PC-9 (cell line): ENCODE measurements at regions of chr1 and their contacts with region 1.

Region 1: DNA sequence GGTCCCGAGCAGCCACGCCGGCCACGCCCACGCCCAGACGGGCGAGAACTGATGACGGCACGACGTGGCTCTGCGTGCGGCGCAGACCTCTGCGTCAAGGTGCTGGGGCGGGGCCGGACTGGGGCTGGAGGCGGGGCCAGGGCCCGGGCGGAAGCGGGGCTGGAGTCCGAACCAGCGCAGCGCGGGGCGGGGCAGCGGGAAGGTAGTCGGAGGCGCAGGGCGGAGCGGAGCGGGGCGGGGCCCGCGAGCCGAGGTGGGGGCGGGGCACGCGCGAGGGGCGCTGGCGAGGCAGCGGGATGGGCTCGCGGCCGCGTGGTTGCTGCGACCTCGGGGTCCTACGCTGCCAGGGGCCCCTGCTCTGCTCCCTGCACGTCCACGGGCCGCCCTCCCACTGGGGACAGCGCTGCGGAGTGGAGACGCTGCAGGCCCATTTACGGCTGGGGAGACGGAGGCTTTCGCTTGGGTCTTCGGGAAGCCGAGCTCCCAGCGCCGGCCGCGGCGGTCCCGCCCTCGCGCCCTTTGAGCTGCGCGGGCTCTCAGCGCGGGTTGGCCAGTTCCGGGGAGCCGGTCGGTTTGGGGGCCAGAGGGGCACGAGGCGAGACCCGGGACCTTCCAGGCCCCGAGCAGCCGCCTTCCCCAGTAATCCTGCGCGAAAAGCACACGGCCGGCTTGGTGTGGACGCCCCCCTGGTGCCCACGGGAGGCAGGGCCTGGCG is at the start of gene PEX10:
- DNase-seq: peak; percentile 81 to 98
- H3K4me3 ChIP-seq: peak within 1 kb of the TSS; percentile 97
- H3K27ac ChIP-seq: peak within 1 kb of the TSS; percentile 36; the same call in 1 of the 2 replicates
- H3K4me1 ChIP-seq: peaks cover 25% of the 10 kb centered on the region
- H3K27me3 ChIP-seq: no peaks in the 10 kb centered on the region
- CTCF ChIP-seq: no peak
- total RNA-seq, gene PEX10: 24.3 and 26.3 TPM in 2 replicates

Region 2: DNA sequence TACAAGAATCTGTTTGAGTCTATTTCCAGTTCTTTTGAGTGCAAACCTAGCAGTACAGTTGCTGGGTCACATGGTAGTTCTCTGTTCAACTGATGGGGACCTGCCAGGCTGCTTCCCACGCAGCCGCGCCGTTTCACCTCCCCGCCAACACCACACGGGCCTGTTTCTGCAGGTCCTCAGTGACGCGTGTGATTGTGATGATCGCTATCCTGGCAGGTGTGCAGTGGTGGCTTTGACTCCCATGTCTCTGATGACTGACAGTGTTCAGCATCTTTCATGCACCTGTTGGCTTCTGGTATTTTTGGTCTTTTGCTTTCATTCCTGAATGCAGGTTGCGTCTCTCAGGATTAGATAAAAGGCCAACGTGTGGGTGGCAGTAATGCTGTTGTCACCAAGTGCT is 259.7 kb before region 1 on chr1:
- CTCF ChIA-PET with region 1: no interaction called
- POLR2A ChIA-PET with region 1: no interaction called
- intact Hi-C with region 1: no loop called
- DNase-seq: no peak
- H3K4me3 ChIP-seq: no peak overlapping the region
- H3K27ac ChIP-seq: no peak overlapping the region
- H3K4me1 ChIP-seq: no peaks in the 10 kb centered on the region
- H3K27me3 ChIP-seq: no peaks in the 10 kb centered on the region
- CTCF ChIP-seq: no peak

Region 3: GRCh38 chr1:2194898-2195673 is 217.6 kb before region 1 on chr1:
- CTCF ChIA-PET with region 1: interaction called, 11 read pairs
- POLR2A ChIA-PET with region 1: interaction called, 6 read pairs
- intact Hi-C with region 1: loop called (anchors 1 kb)
- DNase-seq: peak; percentile 63 to 90
- H3K4me3 ChIP-seq: peak overlapping the region; percentile 60
- H3K27ac ChIP-seq: no peak overlapping the region
- H3K4me1 ChIP-seq: peaks cover 4% of the 10 kb centered on the region
- H3K27me3 ChIP-seq: no peaks in the 10 kb centered on the region
- CTCF ChIP-seq: peak; percentile 93

Region 4: GRCh38 chr1:2391041-2391930 is 21.4 kb before region 1 on chr1 and contains the starts of genes MORN1 and RER1:
- CTCF ChIA-PET with region 1: no interaction called
- POLR2A ChIA-PET with region 1: no interaction called
- intact Hi-C with region 1: loop called (anchors 1 kb)
- DNase-seq: peak; percentile 95 to 98
- H3K4me3 ChIP-seq: peak within 1 kb of the TSS; percentile 80
- H3K27ac ChIP-seq: no peak within 1 kb of the TSS
- H3K4me1 ChIP-seq: peaks cover 19% of the 10 kb centered on the region
- H3K27me3 ChIP-seq: no peaks in the 10 kb centered on the region
- CTCF ChIP-seq: no peak
- total RNA-seq, gene MORN1: 47.8 and 51.0 TPM in 2 replicates
- total RNA-seq, gene RER1: 109 and 131 TPM in 2 replicates

Region 5: GRCh38 chr1:2539312-2539907 is 126.7 kb after region 1 on chr1:
- CTCF ChIA-PET with region 1: interaction called, 14 read pairs
- POLR2A ChIA-PET with region 1: no interaction called
- intact Hi-C with region 1: no loop called
- DNase-seq: no peak
- H3K4me3 ChIP-seq: no peak overlapping the region
- H3K27ac ChIP-seq: no peak overlapping the region
- H3K4me1 ChIP-seq: peaks cover 20% of the 10 kb centered on the region
- H3K27me3 ChIP-seq: no peaks in the 10 kb centered on the region
- CTCF ChIP-seq: peak; percentile 60

Region 6: GRCh38 chr1:2586154-2587070 is 173.7 kb after region 1 on chr1 and contains the start of gene PRXL2B:
- CTCF ChIA-PET with region 1: no interaction called
- POLR2A ChIA-PET with region 1: no interaction called
- intact Hi-C with region 1: loop called (anchors 5 kb)
- DNase-seq: peak; percentile 91 to 98
- H3K4me3 ChIP-seq: peak within 1 kb of the TSS; percentile 75
- H3K27ac ChIP-seq: peak within 1 kb of the TSS; percentile 2; the same call in 1 of the 2 replicates
- H3K4me1 ChIP-seq: no peaks in the 10 kb centered on the region
- H3K27me3 ChIP-seq: no peaks in the 10 kb centered on the region
- CTCF ChIP-seq: no peak
- total RNA-seq, gene PRXL2B: 26.1 and 35.3 TPM in 2 replicates

Region 7: GRCh38 chr1:3423245-3423829 is 1010.7 kb after region 1 on chr1:
- CTCF ChIA-PET with region 1: interaction called, 8 read pairs
- POLR2A ChIA-PET with region 1: no interaction called
- intact Hi-C with region 1: loop called (anchors 5 kb)
- DNase-seq: no peak
- H3K4me3 ChIP-seq: no peak overlapping the region
- H3K27ac ChIP-seq: no peak overlapping the region
- H3K4me1 ChIP-seq: no peaks in the 10 kb centered on the region
- H3K27me3 ChIP-seq: peaks cover 95% of the 10 kb centered on the region
- CTCF ChIP-seq: no peak